ENCODE measurements at regions of chr18 and their contacts with region 1.

Region 1: DNA sequence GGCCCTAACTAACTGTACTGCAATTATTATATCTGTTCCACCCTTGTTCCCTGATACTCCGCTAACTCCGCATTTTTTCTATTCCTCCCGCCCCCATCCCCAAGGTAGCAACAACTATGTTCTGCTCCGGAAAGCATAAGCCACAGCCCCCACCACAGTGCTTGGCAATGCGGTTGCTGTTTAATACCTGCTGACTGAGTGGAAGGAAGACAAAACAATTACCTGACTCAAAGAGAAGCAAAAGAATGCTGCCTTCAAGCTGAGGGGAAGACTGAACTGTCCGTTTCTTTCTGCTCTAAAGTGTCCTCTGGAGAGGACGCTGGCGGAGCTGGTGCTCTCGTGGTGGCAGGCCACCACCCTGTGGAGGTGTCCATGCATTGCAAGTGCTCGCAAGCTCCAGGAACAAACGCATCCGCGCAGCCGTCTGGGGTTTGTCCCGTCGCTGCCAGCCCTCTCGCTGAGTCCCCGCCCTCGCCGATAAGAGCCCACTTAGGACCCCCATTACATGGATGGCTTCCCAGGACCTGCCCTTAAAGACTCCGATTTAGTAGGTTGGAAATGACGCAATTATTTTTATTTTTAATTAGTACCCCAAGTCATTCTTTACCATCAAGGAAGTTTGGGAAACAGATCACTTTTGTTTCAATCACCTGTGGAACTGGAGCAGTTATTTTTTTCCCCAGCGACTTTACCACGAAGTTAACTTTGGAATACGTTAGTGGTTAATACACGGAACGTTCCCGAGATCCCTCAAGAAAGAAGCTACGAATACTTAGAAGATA is 1.6 kb upstream of the MYL12A start:
- DNase-seq: peak; percentile 79
- H3K4me3 Mint-ChIP-seq: peak overlapping the region; percentile 90
- H3K27ac Mint-ChIP-seq: peak overlapping the region; percentile 92
- H3K4me1 Mint-ChIP-seq: peaks cover 32% of the 10 kb centered on the region
- H3K27me3 Mint-ChIP-seq: no peaks in the 10 kb centered on the region

Region 2: GRCh38 chr18:2655178-2655953 is 590.7 kb before region 1 on chr18 and contains the start of gene SMCHD1:
- intact Hi-C with region 1: loop called (anchors 1 kb)
- DNase-seq: peak; percentile 86
- H3K4me3 Mint-ChIP-seq: peak within 1 kb of the TSS; percentile 98
- H3K27ac Mint-ChIP-seq: peak within 1 kb of the TSS; percentile 95
- H3K4me1 Mint-ChIP-seq: peaks cover 33% of the 10 kb centered on the region
- H3K27me3 Mint-ChIP-seq: peaks cover 5% of the 10 kb centered on the region
- total RNA-seq, gene SMCHD1: 100 and 101 TPM in 2 replicates

Region 3: DNA sequence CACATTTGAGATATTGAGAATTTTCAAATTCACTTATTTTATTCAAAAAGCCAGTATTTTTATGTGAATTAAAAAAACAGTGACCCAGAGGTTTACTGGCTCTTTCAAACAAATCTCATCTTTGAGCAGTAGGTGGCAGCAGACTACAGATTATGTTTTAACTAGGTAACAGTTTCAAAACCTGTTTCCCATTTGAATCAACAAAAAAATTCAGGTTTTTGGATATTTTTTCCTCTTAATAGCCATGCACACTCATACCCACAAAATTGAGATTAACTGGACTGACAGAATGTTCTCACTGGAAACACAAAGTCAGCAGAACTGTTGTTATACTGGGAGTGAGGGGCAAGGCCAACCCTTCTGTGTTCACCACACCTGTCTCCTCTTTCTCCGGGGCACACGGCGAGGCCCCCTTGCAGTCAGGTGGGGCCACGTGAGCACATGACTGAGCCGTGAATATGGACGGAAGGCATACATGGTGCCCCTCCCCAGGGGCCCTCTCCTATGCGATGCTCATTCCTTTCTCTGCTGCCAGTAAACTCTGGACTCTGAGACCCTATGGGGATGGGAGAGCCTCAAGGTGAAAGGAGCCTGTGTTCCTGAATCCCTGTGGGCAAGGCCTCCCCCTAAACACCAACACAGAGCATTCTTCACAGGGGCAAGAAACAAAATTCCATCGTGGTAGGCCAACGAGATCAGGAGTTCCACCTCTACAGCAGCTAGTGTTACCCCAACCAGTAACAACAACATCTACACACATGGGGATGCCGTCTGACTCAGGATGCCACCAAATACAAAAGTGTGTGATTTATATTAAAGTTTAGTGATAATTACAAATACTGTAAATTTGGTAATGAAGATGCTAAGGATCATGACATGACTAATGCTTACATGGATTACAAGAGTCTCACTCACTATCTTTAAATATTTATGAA is 313.5 kb before region 1 on chr18:
- intact Hi-C with region 1: loop called (anchors 1 kb)
- DNase-seq: no peak
- H3K4me3 Mint-ChIP-seq: peak overlapping the region; percentile 43
- H3K27ac Mint-ChIP-seq: peak overlapping the region; percentile 89
- H3K4me1 Mint-ChIP-seq: peaks cover 32% of the 10 kb centered on the region
- H3K27me3 Mint-ChIP-seq: no peaks in the 10 kb centered on the region

Region 4: GRCh38 chr18:2978646-2979045 is 267.4 kb before region 1 on chr18:
- intact Hi-C with region 1: loop called (anchors 5 kb)
- DNase-seq: no peak
- H3K4me3 Mint-ChIP-seq: peak overlapping the region; percentile 75
- H3K27ac Mint-ChIP-seq: peak overlapping the region; percentile 91
- H3K4me1 Mint-ChIP-seq: peaks cover 74% of the 10 kb centered on the region
- H3K27me3 Mint-ChIP-seq: no peaks in the 10 kb centered on the region

Region 5: GRCh38 chr18:3012964-3013804 is 232.9 kb before region 1 on chr18 and contains the start of gene LPIN2:
- intact Hi-C with region 1: loop called (anchors 2 kb)
- DNase-seq: peak; percentile 96
- H3K4me3 Mint-ChIP-seq: peak within 1 kb of the TSS; percentile 97
- H3K27ac Mint-ChIP-seq: peak within 1 kb of the TSS; percentile 92
- H3K4me1 Mint-ChIP-seq: peaks cover 58% of the 10 kb centered on the region
- H3K27me3 Mint-ChIP-seq: no peaks in the 10 kb centered on the region
- total RNA-seq, gene LPIN2: 87.9 and 95.9 TPM in 2 replicates

Region 6: DNA sequence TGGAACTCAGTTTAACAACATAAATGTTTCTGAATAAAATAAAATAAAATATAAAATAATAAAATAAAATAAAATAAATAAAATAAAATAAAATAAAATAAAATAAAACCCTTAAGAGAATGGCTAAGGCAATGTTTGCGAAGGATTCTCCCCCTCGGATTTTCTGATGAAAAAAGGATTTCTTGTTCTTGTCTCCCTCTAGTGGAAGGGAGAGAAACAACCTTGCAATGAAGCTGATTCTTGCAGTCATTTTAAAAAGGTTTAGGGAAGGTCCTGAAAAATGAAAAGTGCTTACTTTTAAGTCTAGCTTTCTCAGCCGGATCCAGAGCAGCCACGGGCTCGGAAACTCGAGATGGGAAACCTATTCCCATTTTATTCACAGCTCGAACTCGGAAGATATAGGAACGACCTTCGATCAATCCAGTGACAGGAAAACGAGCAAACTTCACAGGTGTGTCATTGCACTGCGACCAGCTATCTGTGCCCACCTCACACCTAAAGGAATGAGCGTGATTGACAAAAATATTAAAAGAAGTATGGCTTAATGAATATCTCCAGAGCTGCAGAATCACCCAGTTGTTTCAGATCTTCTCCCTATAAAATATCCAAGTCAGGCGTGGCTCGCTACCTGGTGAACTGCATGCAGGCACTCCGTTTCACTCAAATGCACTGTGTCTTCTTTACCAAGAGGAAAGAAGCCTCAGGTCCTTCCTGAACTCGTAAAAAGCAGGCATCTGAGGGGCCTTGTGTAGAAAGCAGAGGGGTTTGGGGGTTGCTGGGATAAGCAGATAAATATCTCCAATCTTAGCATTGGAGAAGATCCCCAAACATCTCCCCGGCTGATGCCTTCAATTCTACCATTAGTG is 94.4 kb before region 1 on chr18:
- intact Hi-C with region 1: loop called (anchors 1 kb)
- DNase-seq: no peak
- H3K4me3 Mint-ChIP-seq: no peak overlapping the region
- H3K27ac Mint-ChIP-seq: no peak overlapping the region
- H3K4me1 Mint-ChIP-seq: peaks cover 10% of the 10 kb centered on the region
- H3K27me3 Mint-ChIP-seq: peaks cover 6% of the 10 kb centered on the region

Region 7: DNA sequence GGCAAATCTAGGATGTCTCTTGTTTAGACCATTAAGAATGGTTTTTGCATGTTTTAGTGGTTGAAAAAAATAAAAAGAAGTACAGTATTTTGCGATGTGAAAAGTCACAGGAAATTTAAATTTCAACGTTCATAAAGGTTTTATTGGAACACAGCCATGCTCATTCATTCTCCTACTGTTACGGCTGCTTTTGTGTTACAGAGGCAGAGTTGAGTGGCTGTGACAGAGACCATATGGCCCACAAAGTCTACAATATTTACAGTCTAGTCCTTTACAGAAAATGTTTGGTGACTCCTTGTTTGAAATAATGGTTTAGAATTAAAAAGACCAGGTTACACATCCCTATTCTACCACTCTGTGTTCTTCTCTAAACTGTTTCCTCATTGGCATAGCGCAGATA is 74.4 kb before region 1 on chr18:
- intact Hi-C with region 1: no loop called
- DNase-seq: no peak
- H3K4me3 Mint-ChIP-seq: no peak overlapping the region
- H3K27ac Mint-ChIP-seq: no peak overlapping the region
- H3K4me1 Mint-ChIP-seq: peaks cover 1% of the 10 kb centered on the region
- H3K27me3 Mint-ChIP-seq: no peaks in the 10 kb centered on the region

Region 8: GRCh38 chr18:3261371-3262246 is 15.6 kb after region 1 on chr18 and contains the start of gene MYL12B:
- intact Hi-C with region 1: loop called (anchors 1 kb)
- DNase-seq: peak; percentile 77
- H3K4me3 Mint-ChIP-seq: peak within 1 kb of the TSS; percentile 97
- H3K27ac Mint-ChIP-seq: peak within 1 kb of the TSS; percentile 99
- H3K4me1 Mint-ChIP-seq: peaks cover 69% of the 10 kb centered on the region
- H3K27me3 Mint-ChIP-seq: no peaks in the 10 kb centered on the region
- total RNA-seq, gene MYL12B: 243 and 245 TPM in 2 replicates

Measured in activated T-helper 2 cell treated with anti-CD3 and anti-CD28 coated beads, Interferon-gamma antibody, Interleukin-2, Interleukin-4, amounts not matched to agents 10 μg/mL and 5 μg/mL and 100 μg/mL, durations not matched to agents 14 hours and 24 hours and 36 hours (primary cell).